Activated naive CD8-positive, alpha-beta T cell treated with anti-CD3 and anti-CD28 coated beads, Interleukin-2, amount 10 ng/mL, durations not matched to agents 7 days and 5 days (primary cell): ENCODE measurements at regions of chr11 and their contacts with region 1.

Region 1: DNA sequence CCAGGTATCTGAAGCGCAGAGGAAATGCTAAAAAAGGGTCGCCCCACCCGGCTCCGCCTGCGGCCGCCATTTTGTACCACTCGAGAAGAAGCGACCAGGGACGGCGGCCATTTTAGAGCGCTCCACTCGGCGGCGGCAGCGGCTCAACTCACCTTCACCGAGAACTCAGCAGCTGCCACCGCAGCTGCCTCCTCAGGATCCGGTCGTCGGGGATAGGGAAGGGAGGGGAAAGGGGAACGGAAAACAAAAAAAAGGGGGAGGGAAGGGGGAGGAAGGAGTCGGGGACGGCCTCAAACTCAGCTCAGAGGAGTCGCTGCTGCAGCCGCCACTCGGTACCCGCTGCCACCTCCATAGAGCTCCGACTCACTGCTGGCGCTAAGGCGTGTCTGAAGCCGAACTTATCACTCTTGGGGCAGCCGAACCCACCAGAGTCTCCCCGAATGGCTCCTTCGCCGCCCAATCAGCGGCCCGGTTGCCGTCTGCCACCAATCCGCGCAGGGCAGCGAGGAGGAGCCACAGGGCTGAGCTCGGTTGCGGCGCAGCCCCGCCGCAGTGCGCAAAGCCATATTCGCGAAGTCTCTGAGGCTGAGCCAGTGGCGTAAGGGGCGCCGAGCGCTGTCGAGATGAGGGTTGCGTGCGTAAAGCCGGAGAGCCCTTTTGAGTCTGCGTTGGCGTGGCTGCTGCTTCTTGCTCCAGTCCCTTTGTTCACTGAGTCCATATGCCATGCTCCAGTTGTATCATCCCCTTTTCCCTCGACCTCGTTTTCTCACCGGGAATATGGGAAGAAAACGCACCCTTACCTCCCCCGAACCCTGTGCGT is at the start of gene EIF4G2:
- DNase-seq: peak; percentile 98
- ATAC-seq: peak; percentile 91
- H3K4me3 Mint-ChIP-seq: peak within 1 kb of the TSS; percentile 96
- H3K27ac Mint-ChIP-seq: peak within 1 kb of the TSS; percentile 98
- H3K4me1 Mint-ChIP-seq: peaks cover 29% of the 10 kb centered on the region
- H3K27me3 Mint-ChIP-seq: peaks cover 3% of the 10 kb centered on the region
- total RNA-seq, gene EIF4G2: 586 to 630 TPM

Region 2: GRCh38 chr11:10750838-10751580 is 57.8 kb before region 1 on chr11 and contains the start of gene CTR9:
- POLR2A ChIA-PET with region 1: interaction called, 19 read pairs
- DNase-seq: peak; percentile 94
- ATAC-seq: peak; percentile 88
- H3K4me3 Mint-ChIP-seq: peak within 1 kb of the TSS; percentile 87
- H3K27ac Mint-ChIP-seq: peak within 1 kb of the TSS; percentile 84
- H3K4me1 Mint-ChIP-seq: peaks cover 22% of the 10 kb centered on the region
- H3K27me3 Mint-ChIP-seq: no peaks in the 10 kb centered on the region
- total RNA-seq, gene CTR9: 45.3 to 47.6 TPM

Region 3: GRCh38 chr11:10797531-10797930 is 11.2 kb before region 1 on chr11:
- POLR2A ChIA-PET with region 1: interaction called, 46 read pairs
- DNase-seq: no peak
- ATAC-seq: no peak
- H3K4me3 Mint-ChIP-seq: no peak overlapping the region
- H3K27ac Mint-ChIP-seq: no peak overlapping the region
- H3K4me1 Mint-ChIP-seq: peaks cover 57% of the 10 kb centered on the region
- H3K27me3 Mint-ChIP-seq: peaks cover 4% of the 10 kb centered on the region

Region 4: DNA sequence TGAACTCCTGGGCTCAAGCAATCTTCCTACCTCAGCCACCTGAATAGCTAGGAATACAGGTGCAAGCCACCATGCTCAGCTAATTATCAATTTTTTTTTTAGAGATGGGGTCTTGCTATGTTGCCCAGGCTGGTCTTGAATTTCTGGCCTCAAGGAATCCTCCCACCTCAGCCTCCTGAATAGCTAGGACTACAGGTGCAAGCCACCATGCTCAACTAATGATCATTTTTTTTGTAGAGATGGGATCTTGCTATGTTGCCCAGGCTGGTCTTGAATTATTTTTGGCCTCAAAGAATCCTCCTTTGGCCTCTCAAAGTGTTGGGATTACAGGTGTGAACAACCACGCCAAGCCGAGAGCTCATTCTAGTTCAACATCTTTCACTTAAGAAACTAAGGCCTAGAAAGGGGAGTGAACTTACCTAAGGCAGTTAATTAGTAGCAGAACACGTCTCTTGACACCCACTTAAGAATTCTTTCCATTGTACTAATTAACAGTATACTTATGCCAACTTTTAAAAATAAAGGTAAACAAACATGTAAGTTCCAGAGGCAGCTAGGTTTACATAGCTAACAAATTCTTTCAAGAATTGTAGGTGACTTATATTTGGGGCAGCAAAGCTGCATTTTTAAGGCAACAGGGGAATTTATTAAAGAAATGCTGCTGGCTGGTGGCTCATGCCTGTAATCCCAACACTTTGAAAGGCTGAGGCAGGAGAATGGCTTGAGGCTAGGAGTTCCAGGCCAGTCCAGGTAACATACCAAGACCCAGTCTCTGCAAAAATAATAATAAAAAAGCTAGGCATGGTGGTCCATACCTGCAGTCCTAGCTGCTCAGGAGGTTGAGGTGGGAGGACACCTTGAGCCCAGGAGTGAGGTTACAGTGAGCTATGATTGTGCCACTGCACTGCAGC is 39.5 kb after region 1 on chr11:
- POLR2A ChIA-PET with region 1: interaction called, 17 read pairs
- DNase-seq: no peak
- ATAC-seq: no peak
- H3K4me3 Mint-ChIP-seq: no peak overlapping the region
- H3K27ac Mint-ChIP-seq: no peak overlapping the region
- H3K4me1 Mint-ChIP-seq: peaks cover 5% of the 10 kb centered on the region
- H3K27me3 Mint-ChIP-seq: no peaks in the 10 kb centered on the region

Region 5: GRCh38 chr11:11841723-11842420 is 1033.1 kb after region 1 on chr11 and contains the start of gene USP47:
- POLR2A ChIA-PET with region 1: interaction called, 15 read pairs
- DNase-seq: peak; percentile 98
- ATAC-seq: peak; percentile 77
- H3K4me3 Mint-ChIP-seq: no peak within 1 kb of the TSS
- H3K27ac Mint-ChIP-seq: no peak within 1 kb of the TSS
- H3K4me1 Mint-ChIP-seq: peaks cover 21% of the 10 kb centered on the region
- H3K27me3 Mint-ChIP-seq: no peaks in the 10 kb centered on the region
- total RNA-seq, gene USP47: 43.7 to 46.0 TPM